ENCODE measurements at regions of chr12 and their contacts with region 1.

Region 1: DNA sequence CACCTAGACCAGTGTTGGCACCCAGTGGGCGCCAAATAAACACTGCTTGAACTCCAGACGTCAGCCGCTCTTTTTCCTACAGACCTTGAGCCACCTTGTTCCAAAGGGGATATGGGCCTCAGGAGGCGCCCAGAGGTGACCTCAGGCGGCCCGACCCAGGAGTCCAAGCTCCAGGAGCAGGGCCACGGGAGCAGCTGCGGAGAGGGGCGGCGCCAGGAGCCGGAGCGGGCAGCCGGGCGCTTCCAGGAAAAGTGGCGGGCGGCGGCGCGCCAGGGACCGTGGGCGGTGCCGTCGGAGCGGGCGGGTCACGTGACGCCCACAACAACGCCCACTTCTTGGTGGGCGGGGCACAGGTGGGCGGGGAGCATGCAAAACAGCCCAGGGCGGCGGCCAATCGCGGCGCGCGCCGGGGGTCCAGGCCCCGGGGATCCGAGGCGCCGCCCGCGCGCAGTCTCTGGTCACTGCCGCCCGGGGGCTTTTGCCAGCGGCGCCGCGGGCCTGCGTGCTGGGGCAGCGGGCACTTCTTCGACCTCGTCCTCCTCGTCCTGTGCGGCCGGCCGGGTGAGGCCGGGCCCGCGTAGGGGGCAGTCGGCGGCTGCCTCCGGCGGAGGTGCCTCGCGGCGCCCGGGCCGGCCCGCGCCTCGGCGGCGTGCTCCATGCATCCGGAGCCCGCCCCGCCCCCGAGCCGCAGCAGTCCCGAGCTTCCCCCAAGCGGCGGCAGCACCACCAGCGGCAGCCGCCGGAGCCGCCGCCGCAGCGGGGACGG is at the start of gene ORAI1:
- DNase-seq: peak; percentile 98
- ATAC-seq: peak; percentile 50
- H3K4me3 Mint-ChIP-seq: peak within 1 kb of the TSS; percentile 92
- H3K27ac Mint-ChIP-seq: peak within 1 kb of the TSS; percentile 99
- H3K4me1 Mint-ChIP-seq: peaks cover 36% of the 10 kb centered on the region
- H3K27me3 Mint-ChIP-seq: no peaks in the 10 kb centered on the region
- total RNA-seq, gene ORAI1: 29.4 to 35.9 TPM

Region 2: DNA sequence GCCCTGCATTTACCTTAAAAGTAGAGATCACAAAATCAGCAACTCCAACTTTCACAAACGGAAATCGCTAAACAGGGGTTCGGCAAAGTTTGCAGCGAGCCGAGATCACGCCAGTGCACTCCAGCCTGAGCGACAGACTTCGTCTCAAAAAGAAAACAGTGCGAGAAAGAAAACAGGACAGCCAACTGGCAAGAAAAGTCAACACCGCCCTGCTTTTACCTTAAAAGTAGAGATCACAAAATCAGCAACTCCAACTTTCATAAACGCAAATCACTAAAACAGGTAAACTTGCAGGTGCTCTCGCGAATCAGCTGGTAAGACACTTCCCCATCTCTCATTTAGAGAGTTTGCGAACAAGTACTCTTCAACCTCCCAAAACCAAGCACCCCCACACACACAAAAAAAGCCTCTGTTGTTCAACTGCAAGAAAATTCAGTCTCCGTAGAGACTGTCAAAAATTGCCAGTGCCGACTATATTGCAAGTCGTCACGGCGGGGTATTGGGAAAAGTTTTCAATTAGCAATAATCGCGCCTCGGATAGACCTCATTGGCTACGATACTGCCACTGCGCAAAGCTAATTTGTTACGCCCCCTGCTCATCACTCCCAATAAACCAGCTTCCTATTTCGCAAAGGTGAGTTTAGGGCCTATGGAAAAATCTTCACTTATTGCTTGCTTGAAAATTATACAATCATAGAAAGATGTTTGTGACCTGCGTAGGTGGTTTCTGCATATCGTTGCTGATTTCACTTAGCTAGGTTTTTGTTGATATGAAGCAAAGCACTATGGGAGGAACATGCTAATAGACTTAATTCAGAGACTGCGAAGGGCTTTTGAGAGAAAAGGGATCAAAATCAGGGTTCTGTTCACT is 1333.4 kb before region 1 on chr12 and contains the start of gene RNU4-1:
- CTCF ChIA-PET with region 1: no interaction called
- POLR2A ChIA-PET with region 1: no interaction called
- intact Hi-C with region 1: loop called in 1 of 2 experiments (anchors 2 kb)
- DNase-seq: peak; percentile 88
- ATAC-seq: peak; percentile 69
- H3K4me3 Mint-ChIP-seq: no peak within 1 kb of the TSS
- H3K27ac Mint-ChIP-seq: no peak within 1 kb of the TSS
- H3K4me1 Mint-ChIP-seq: peaks cover 7% of the 10 kb centered on the region
- H3K27me3 Mint-ChIP-seq: no peaks in the 10 kb centered on the region
- total RNA-seq, gene RNU4-1: 323 to 1,150 TPM

Region 3: DNA sequence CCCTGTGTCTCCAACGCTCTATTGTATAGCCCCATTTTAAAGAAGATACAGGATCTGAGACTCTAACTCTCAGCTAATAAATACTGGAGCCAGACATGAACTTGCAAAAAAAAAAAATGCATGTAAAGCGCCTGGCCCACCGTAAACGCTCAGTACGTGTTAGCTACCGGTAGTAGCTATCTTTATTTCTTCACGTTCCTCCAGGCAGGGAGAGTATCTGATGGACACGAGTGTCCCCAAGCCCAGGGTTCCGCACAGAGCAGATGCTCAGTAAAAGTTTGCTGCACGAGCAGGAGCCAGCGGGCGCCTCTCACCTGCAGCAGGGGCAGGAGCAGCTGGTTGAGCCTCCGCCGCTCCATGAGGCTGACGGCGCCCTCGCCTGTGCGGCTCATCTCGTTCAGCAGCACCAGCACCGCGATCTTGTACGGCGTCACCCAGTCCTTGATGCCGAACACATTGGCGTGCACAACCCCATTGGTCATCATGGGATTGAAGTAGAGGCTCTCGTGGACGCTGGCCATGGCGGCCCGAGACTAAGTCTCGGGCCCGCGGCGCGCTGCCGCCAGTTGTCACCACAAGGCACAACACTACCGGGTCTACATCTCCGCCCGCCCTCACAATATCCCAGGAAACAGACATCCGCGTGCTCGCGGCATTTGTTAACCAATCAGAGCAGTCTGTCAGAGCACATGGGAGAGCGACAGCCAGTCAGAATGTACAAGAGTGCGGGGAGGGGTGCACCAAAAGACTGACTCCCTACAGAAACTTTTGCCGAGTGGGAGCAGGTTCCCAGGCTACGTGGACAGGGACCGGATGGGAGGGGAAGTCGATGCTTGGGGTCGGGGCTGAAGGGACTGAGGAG is 274.2 kb before region 1 on chr12 and contains the start of gene ANAPC5:
- CTCF ChIA-PET with region 1: no interaction called
- POLR2A ChIA-PET with region 1: no interaction called
- intact Hi-C with region 1: loop called in 1 of 2 experiments (anchors 1 kb)
- DNase-seq: peak; percentile 94
- ATAC-seq: peak; percentile 99
- H3K4me3 Mint-ChIP-seq: peak within 1 kb of the TSS; percentile 92
- H3K27ac Mint-ChIP-seq: peak within 1 kb of the TSS; percentile 97
- H3K4me1 Mint-ChIP-seq: peaks cover 24% of the 10 kb centered on the region
- H3K27me3 Mint-ChIP-seq: peaks cover under 1% of the 10 kb centered on the region
- total RNA-seq, gene ANAPC5: 113 to 118 TPM

Region 4: DNA sequence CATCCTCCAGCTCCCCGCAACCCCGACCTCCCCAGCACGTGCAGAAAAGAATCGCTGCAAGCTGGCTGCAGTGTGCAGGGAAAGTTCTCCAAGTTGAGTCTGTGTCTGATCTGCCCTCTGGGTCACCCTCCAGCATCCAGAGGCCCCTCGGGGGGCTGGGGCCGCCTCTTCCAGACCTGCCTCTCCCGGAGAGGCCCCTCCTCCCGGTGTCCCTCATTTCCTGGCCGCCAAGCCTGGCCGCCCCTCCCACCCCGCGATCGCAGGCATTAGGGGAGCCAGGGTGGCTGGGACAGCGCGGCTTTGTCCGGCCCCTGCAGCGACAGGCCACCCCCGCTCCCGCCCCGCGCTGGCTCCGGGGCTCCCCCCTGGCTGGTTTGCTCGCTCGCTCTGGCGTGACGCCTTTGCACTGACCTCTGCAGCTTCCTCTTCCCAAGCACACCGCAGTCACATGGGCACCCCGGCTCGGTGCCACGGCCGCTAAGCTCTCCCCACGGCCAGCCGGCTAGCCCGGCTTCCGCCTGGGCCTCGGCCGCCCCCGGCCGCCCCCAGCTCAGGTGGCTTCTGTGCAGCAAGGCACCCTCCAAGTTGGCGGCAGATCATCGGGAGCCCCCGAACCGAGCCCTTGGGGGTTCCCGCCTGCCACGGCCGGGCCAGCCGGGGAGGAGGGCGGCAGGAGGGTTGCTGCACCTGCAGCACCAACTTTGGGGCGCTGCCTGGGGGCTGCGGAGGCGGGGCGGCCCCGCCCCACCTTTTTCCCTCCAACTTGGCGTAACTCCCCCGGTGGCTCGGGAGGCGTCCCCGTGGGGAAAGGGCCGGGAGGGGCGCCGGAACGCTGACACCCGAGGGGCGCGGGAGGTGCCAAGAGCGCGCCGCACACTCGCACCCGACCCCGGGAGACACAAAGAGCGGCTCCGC is 89.1 kb before region 1 on chr12:
- CTCF ChIA-PET with region 1: interaction called, 3 read pairs
- POLR2A ChIA-PET with region 1: interaction called, 4 read pairs
- intact Hi-C with region 1: loop called (anchors 1 to 5 kb)
- DNase-seq: peak; percentile 76
- ATAC-seq: peak; percentile 40
- H3K4me3 Mint-ChIP-seq: peak overlapping the region; percentile 67
- H3K27ac Mint-ChIP-seq: peak overlapping the region; percentile 62
- H3K4me1 Mint-ChIP-seq: peaks cover 48% of the 10 kb centered on the region
- H3K27me3 Mint-ChIP-seq: no peaks in the 10 kb centered on the region

Region 5: DNA sequence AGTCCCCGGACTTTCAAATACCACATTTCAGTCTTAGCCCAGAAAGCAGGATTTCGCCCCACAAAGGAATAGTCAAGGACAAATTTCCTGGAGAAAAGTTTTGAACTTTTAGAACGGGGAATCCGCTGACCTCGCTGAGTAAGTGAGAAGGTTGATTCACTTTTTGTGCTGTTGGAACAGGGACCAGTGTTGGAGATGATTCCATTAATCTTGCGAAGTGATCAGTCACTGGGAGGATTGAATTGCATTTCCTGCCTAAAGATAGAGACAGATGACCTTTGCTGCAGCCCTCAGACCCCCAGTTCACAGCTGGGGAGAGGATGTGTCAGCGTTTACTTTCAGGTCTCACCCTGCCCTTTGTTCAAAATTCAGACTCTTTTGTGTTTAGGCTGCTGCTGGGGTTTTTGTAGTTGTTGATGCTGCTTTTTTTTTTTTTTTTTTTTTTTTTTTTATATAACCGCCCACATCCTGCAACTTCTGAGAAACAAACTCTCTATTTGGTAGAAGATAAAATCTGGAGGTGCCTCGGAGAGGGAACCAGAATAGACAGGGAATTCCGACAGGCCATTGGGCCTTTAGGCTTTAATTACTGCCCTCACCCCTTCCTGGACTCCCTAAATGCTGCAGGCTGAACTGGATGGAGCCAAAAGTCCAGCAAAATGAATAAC is 35.7 kb before region 1 on chr12:
- CTCF ChIA-PET with region 1: interaction called, 7 read pairs
- POLR2A ChIA-PET with region 1: interaction called, 10 read pairs
- intact Hi-C with region 1: loop called (anchors 1 kb)
- DNase-seq: peak; percentile 79
- ATAC-seq: peak; percentile 82
- H3K4me3 Mint-ChIP-seq: peak overlapping the region; percentile 75
- H3K27ac Mint-ChIP-seq: peak overlapping the region; percentile 98
- H3K4me1 Mint-ChIP-seq: peaks cover 32% of the 10 kb centered on the region
- H3K27me3 Mint-ChIP-seq: no peaks in the 10 kb centered on the region

Region 6: DNA sequence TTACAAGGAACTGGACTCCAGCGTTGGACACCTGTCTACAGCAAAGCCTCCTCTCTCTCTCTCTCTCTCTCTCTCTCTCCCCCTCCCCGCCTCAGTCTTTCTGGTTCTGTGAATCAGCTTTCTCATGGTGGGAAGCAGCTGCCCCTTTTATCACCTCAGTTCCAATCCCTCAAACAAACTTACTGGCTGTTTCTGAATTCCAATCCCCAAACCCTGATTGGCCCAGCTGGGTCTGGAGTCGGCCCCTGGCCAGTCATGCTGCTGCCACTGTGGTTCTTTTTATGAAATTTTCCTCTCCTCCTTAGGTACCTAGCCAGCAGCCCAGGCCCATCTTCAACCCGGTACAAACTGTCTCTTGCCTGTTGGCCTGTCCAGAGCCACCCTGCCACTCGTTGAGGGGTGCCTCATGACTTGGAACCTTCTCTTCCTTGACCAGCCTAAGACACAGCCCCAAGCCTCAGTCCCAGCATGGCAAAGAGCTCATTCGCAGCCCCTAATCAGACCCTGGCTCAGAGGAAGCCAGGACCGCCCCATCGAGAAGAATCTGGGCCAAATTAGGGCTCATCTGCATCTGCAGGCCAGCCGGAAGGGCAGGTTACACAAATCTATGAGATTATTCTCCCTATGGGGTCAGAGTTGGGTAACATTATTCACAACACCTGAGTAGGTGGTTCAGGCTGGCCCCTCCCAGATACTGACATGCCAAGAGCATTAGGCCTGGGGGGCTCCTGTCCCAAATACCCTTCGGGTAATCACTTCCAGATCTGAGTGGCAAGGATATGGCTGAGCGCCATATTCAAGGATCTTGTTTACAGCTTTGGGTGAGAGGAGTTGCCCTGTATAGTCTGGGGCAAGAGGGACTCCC is 52.7 kb after region 1 on chr12:
- CTCF ChIA-PET with region 1: interaction called, 4 read pairs
- POLR2A ChIA-PET with region 1: no interaction called
- intact Hi-C with region 1: loop called in 1 of 2 experiments (anchors 1 kb)
- DNase-seq: peak; percentile 32
- ATAC-seq: peak; percentile 21
- H3K4me3 Mint-ChIP-seq: no peak overlapping the region
- H3K27ac Mint-ChIP-seq: peak overlapping the region; percentile 23
- H3K4me1 Mint-ChIP-seq: peaks cover 7% of the 10 kb centered on the region
- H3K27me3 Mint-ChIP-seq: no peaks in the 10 kb centered on the region

Region 7: DNA sequence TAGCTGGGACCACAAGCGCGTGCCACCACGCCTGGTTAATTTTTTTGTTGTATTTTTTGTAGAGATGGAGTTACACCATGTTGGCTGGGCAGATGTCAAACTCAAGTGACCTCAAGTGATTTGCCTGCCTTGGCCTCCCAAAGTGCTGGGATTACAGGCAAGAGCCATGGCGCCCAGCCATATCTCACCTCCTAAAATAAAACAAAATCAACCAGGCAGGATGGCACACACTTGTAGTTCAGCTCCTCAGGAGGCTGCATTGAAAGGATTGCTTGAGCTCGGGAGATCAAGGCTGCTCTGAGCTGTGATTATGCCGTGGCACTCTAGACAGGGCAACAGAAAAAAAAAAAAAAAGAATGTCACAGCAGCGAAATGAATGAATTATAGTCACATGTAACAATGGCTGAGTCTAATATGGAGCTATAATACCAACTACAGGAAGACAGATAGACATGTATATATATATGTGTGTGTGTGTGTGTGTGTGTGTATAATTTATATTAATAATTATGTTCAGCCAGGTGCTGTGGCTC is 67.0 kb after region 1 on chr12:
- CTCF ChIA-PET with region 1: no interaction called
- POLR2A ChIA-PET with region 1: no interaction called
- intact Hi-C with region 1: no loop called
- DNase-seq: no peak
- ATAC-seq: no peak
- H3K4me3 Mint-ChIP-seq: no peak overlapping the region
- H3K27ac Mint-ChIP-seq: no peak overlapping the region
- H3K4me1 Mint-ChIP-seq: no peaks in the 10 kb centered on the region
- H3K27me3 Mint-ChIP-seq: no peaks in the 10 kb centered on the region

Region 8: DNA sequence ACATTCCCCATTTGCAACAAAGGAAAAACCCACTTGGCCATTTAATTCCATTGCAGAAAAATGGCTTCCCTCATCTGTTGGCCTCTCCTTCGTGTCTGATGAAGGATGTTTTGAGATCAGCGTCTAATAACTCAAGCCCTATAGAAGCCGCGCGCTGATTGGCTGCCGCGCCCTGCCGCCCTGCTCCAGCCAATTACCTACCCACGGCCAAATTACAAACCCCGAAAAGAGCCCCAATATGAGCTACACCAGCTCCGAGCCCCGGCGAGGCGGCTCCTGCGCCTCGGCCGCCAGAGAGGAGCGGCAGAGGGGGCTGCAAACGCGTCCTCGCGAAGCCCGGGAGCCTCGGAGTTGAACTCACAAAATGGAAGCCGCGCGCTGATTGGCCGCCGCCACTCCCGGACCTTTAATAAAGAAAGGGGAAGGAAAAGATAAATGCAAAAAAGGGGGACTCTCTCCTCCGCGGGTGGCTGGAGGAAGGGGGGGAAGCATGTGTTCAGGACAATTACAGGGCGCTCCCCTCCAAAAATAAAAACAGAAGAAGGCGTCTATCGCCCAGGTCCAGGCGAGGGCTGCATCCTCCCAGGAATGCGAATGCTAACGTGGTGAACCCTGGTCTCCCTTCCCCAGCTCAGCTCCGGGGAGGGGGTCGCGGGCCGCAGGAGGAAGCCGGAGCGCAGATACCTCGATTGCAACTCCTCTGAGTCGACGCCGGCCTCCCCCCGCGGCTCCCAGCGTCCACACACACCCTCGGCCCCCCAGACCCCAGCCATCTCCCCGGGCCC is 176.8 kb after region 1 on chr12:
- CTCF ChIA-PET with region 1: interaction called, 4 read pairs
- POLR2A ChIA-PET with region 1: interaction called, 3 read pairs
- intact Hi-C with region 1: loop called in 1 of 2 experiments (anchors 1 kb)
- DNase-seq: peak; percentile 95
- ATAC-seq: peak; percentile 62
- H3K4me3 Mint-ChIP-seq: peak overlapping the region; percentile 88
- H3K27ac Mint-ChIP-seq: peak overlapping the region; percentile 99
- H3K4me1 Mint-ChIP-seq: peaks cover 30% of the 10 kb centered on the region
- H3K27me3 Mint-ChIP-seq: no peaks in the 10 kb centered on the region

Measured in activated CD4-positive, alpha-beta T cell treated with anti-CD3 and anti-CD28 coated beads for 36 hours (primary cell).